ENCODE measurements at regions of chr10 and their contacts with region 1.

Region 1: GRCh38 chr10:110803830-110804338 is 67.8 kb upstream of the PDCD4 start:
- DNase-seq: peak; percentile 61
- H3K4me3 Mint-ChIP-seq: no peak overlapping the region
- H3K27ac Mint-ChIP-seq: no peak overlapping the region
- H3K4me1 Mint-ChIP-seq: peaks cover 32% of the 10 kb centered on the region
- H3K27me3 Mint-ChIP-seq: no peaks in the 10 kb centered on the region
- CTCF ChIP-seq: peak; percentile 49

Region 2: DNA sequence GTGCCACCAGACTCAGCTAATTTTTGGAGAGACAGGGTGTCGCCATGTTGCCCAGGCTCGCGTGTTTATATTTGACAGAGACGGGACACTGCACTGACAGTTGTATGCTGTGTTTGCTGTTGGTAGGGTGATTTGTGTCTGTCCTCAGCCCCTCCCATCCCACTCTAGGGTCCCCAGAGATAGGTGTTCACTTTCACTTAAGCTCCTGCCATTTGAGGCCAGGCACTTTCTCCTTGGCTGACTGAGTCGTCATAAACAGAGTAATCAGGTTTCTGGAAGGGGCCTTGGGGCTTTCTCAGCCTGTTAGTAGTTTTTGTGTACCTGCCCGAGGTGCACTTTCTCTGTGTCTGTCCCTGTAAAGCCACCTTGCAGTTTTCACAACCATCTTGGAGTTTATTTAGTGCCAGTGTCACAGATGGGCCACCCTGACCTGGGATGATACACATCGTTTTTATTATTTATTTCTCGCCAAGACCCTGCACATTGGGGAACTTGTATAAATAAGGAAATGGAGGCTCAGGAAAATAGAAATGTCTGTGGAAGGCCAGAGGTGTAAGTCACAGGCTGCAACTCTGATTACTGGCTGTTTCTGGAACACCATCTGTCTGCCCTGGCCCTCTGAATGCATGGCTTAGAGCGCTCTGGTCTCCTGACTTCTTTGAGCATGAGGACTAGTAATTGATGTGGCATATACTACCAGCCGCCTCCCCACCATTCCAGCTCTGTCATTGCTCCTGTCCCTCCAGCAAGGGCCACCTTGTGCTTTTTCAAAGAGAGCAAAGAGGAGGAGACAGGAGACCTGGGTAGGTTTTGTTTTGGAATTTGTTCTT is 14.1 kb before region 1 on chr10:
- CTCF ChIA-PET with region 1: interaction called, 7 read pairs
- POLR2A ChIA-PET with region 1: interaction called, 12 read pairs
- intact Hi-C with region 1: no loop called
- DNase-seq: no peak
- H3K4me3 Mint-ChIP-seq: no peak overlapping the region
- H3K27ac Mint-ChIP-seq: no peak overlapping the region
- H3K4me1 Mint-ChIP-seq: no peaks in the 10 kb centered on the region
- H3K27me3 Mint-ChIP-seq: no peaks in the 10 kb centered on the region
- CTCF ChIP-seq: no peak

Region 3: DNA sequence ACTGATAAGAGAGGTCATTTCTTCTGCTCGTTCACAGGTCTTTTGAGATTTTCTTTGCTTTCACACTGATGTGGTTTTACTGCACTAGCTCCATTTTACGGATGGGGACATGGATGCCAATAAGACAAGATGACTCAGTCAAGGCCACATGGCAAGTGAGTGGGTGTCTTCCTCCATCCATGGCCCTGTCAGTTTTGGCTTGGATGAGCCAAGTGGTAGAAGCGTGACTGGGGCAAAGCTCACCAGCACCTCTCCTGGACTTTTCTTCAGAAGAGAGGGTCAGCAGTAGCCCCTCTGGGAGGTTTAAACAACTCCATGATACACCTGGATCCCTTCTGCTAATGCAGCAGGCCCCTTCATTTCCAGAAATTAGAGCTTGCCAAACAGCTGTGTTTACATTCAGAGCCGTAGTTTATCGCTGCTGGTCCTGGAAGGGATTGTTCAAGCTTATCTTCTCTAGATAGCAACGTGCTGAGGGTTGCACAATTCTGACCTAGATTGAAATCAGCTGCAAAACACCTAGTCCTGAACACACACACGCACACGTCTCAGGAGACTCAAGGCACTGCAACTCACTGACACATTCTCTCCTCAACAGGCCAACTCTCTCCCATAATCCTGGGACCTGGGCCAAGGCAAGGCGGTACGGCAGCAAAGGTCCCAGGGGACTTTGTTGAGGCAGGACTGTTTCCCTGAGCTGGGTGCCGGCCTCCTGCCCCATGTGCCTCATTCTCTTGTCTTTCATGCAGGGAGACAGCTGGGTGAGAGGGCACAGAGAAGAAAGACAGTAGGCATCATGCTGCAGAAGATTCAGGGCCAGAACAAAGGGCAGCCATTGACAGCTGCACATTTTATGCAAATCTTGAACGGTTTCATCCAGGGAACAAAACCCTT is 53.6 kb after region 1 on chr10:
- CTCF ChIA-PET with region 1: interaction called, 16 read pairs
- POLR2A ChIA-PET with region 1: interaction called, 37 read pairs
- intact Hi-C with region 1: no loop called
- DNase-seq: peak; percentile 52
- H3K4me3 Mint-ChIP-seq: no peak overlapping the region
- H3K27ac Mint-ChIP-seq: peak overlapping the region; percentile 39
- H3K4me1 Mint-ChIP-seq: peaks cover 48% of the 10 kb centered on the region
- H3K27me3 Mint-ChIP-seq: no peaks in the 10 kb centered on the region
- CTCF ChIP-seq: no peak

Region 4: DNA sequence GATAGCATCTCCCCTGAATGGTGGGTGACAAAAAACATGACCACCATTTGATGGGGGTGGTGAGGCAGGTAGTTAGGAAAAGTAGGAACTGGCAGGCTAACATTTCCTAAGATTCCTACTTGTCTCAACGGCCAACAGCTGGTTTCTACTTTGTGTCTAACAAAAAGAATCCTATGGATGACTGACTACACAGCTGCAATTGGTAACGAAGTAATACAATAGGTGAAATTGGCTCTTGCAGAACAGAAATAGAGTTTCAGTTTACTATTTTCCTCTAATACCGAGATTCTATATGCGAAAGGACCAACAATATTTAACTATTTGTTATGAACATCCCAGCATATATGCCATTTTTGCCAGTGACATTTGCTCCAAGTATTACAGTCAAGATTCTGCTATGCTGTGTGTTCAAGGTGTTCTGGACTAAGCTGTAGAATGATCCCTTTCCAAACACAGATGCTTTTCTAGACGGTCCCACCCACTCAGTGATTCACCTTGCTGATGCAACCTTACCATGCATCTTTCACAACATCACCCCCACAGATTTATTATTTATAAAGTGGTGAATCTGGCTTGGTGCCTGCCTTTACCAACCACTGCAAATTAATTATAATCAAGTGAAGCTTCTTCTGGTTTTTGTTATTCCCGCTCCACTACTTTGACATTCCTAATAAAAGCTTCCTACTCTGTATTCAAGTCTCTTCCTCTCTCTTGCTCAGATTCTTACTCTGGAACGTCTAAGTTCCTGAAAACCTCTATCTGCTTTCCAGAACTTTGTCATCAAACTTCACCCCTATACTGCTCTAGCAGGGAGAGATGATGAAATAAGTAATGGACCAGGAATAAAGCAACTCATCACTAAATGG is 98.3 kb after region 1 on chr10:
- CTCF ChIA-PET with region 1: interaction called, 18 read pairs
- POLR2A ChIA-PET with region 1: interaction called, 5 read pairs
- intact Hi-C with region 1: no loop called
- DNase-seq: peak; percentile 93
- H3K4me3 Mint-ChIP-seq: peak overlapping the region; percentile 2
- H3K27ac Mint-ChIP-seq: peak overlapping the region; percentile 4
- H3K4me1 Mint-ChIP-seq: peaks cover 20% of the 10 kb centered on the region
- H3K27me3 Mint-ChIP-seq: no peaks in the 10 kb centered on the region
- CTCF ChIP-seq: no peak

Measured in MCF 10A (cell line).